MCF 10A (cell line): ENCODE measurements at regions of chr13 and their contacts with region 1.

Region 1: GRCh38 chr13:114065141-114065925 is 67.1 kb downstream of the RASA3 start:
- DNase-seq: peak; percentile 99
- H3K4me3 Mint-ChIP-seq: peak overlapping the region; percentile 72
- H3K27ac Mint-ChIP-seq: peak overlapping the region; percentile 94
- H3K4me1 Mint-ChIP-seq: peaks cover 42% of the 10 kb centered on the region
- H3K27me3 Mint-ChIP-seq: no peaks in the 10 kb centered on the region
- CTCF ChIP-seq: no peak

Region 2: DNA sequence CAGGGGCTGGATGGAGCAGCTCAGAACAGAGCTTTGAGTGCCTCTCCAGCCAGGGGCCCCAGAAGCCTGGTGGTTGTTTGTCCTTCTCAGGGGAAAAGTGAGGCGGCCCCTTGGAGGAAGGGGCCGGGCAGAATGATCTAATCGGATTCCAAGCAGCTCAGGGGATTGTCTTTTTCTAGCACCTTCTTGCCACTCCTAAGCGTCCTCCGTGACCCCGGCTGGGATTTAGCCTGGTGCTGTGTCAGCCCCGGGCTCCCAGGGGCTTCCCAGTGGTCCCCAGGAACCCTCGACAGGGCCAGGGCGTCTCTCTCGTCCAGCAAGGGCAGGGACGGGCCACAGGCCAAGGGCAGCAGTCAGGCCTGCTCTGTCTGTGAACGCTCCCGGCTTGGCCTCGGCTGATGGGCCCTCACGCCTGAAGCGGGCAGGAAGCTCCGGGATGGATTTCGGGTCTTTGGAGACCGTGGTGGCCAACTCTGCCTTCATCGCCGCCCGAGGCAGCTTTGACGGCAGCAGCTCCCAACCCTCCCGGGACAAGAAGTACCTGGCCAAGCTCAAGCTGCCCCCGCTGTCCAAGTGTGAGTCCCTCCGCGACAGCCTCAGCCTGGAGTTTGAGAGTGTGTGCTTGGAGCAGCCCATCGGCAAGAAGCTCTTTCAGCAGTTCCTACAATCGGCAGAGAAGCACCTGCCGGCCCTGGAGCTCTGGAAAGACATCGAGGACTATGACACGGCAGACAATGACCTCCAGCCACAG is 398.2 kb before region 1 on chr13 and contains the start of gene GRK1:
- CTCF ChIA-PET with region 1: no interaction called
- POLR2A ChIA-PET with region 1: no interaction called
- intact Hi-C with region 1: no loop called
- DNase-seq: no peak
- H3K4me3 Mint-ChIP-seq: no peak within 1 kb of the TSS
- H3K27ac Mint-ChIP-seq: no peak within 1 kb of the TSS
- H3K4me1 Mint-ChIP-seq: no peaks in the 10 kb centered on the region
- H3K27me3 Mint-ChIP-seq: no peaks in the 10 kb centered on the region
- CTCF ChIP-seq: no peak
- total RNA-seq, gene GRK1: not detected in 2 replicates

Region 3: DNA sequence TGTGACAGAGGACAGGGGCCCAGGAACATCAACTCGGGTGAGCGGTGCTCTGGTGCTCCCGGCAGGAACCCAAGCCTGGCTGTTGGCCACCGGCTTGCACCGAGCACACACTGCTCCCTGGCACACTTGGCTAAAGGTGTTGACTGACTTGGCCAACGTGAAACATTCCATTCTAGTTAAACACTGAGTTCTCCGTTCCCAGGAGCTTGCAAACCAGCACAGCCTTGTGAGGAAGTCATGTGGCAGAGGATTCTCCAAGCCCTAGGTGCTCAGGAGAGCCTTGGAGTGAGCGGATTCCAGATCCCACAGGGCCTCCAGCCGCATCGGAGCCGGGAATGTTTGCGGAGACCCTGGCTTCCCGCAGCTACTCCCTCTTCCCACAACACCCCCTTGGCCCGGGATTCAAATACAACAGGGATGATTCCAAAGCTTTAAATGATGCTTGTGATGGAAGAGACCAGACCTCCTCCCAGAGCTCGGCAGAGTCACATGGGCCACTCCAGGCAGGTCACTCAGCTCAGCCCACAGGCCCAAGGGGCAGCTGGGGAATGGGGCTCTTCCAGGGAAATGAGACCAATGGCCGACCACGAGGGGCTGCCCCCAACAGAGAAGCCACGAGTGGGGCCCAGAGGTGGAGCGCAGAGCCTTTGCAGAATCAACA is 94.4 kb before region 1 on chr13:
- CTCF ChIA-PET with region 1: no interaction called
- POLR2A ChIA-PET with region 1: interaction called, 47 read pairs
- intact Hi-C with region 1: no loop called
- DNase-seq: peak; percentile 96
- H3K4me3 Mint-ChIP-seq: peak overlapping the region; percentile 67
- H3K27ac Mint-ChIP-seq: peak overlapping the region; percentile 86
- H3K4me1 Mint-ChIP-seq: peaks cover 5% of the 10 kb centered on the region
- H3K27me3 Mint-ChIP-seq: no peaks in the 10 kb centered on the region
- CTCF ChIP-seq: no peak

Region 4: DNA sequence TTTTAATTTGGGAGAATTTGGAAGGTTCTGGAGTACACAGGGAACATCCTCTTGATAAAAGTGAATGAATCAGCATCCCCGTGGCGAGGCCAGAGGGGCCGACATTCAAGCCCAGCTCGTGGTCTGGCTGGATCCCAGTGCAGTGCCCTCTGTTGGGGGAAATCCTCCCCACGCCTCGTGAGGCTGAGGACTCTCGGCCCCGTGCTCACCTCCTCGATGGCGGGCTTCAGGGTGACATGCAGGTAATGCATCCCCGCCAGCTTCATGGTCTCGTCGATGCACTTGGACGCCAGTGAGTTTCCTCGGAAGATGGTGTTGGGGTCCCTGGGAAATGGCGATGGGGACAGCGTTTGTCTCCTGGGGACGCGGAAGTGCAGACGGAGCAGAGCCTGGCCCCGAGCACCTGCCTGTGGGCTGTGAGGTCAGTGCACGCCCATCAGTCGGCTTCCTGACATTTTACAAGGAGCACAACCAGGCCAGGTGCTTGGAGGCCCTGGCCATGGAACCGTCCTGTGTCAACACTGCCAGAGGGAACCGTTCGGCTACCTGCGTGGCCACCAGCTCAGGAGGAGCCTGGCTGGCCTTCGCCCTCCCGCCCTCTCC is 48.2 kb before region 1 on chr13:
- CTCF ChIA-PET with region 1: interaction called, 3 read pairs
- POLR2A ChIA-PET with region 1: interaction called, 22 read pairs
- intact Hi-C with region 1: loop called (anchors 1 kb)
- DNase-seq: peak; percentile 20
- H3K4me3 Mint-ChIP-seq: no peak overlapping the region
- H3K27ac Mint-ChIP-seq: no peak overlapping the region
- H3K4me1 Mint-ChIP-seq: peaks cover 13% of the 10 kb centered on the region
- H3K27me3 Mint-ChIP-seq: no peaks in the 10 kb centered on the region
- CTCF ChIP-seq: no peak

Region 5: GRCh38 chr13:114151565-114152284 is 86.4 kb after region 1 on chr13:
- CTCF ChIA-PET with region 1: interaction called, 5 read pairs
- POLR2A ChIA-PET with region 1: no interaction called
- intact Hi-C with region 1: loop called (anchors 1 kb)
- DNase-seq: peak; percentile 93
- H3K4me3 Mint-ChIP-seq: no peak overlapping the region
- H3K27ac Mint-ChIP-seq: peak overlapping the region; percentile 57
- H3K4me1 Mint-ChIP-seq: peaks cover 10% of the 10 kb centered on the region
- H3K27me3 Mint-ChIP-seq: peaks cover 4% of the 10 kb centered on the region
- CTCF ChIP-seq: peak; percentile 17

Region 6: DNA sequence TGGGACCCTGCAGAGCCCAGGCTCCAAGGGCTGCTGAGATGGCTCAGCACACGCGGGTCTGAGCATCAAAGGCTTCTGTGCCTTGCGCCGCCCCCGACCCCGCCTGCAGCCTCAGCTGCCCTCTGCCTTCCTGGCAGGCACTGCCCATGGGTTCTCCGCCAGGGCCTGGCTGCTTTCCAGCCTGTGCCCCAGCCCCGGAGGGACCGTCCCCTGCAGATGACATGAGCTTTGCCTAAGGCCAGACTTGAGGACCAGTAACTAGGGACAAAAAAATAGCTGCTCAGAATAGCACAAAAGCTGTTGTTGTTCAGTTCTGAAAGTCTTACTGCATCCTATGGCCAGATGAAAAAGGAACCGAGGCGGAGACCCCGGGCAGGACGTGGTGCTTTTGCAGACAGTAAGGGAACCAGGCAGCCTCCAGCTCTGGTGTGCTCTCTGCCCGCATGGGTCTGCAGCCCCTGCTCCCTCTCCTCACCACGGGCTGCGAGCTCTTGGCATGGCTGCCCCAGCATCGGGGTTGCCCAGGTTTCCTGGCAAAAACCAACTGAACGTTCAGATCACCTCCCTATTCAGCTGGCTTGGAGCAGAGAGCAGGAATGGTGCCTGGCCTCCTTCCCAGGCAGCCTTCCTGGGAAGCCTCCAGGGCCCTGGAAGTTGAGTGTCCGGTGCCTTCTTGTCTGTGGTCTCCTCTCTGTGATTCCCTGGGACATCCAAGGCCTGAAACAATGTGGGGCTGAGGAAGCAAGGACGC is 101.2 kb after region 1 on chr13:
- CTCF ChIA-PET with region 1: no interaction called
- POLR2A ChIA-PET with region 1: no interaction called
- intact Hi-C with region 1: no loop called
- DNase-seq: no peak
- H3K4me3 Mint-ChIP-seq: no peak overlapping the region
- H3K27ac Mint-ChIP-seq: no peak overlapping the region
- H3K4me1 Mint-ChIP-seq: no peaks in the 10 kb centered on the region
- H3K27me3 Mint-ChIP-seq: peaks cover 19% of the 10 kb centered on the region
- CTCF ChIP-seq: no peak